ENCODE measurements at regions of chr7 and their contacts with region 1.

Region 1: GRCh38 chr7:7681179-7681935 is 37.0 kb downstream of the RPA3 start:
- DNase-seq: peak; percentile 80
- ATAC-seq: peak; percentile 93
- H3K4me3 ChIP-seq: peak overlapping the region; percentile 16; the same call in 1 of the 2 replicates
- H3K27ac ChIP-seq: no peak overlapping the region
- H3K4me1 ChIP-seq: peaks cover 11% of the 10 kb centered on the region
- H3K27me3 ChIP-seq: no peaks in the 10 kb centered on the region
- CTCF ChIP-seq: peak; percentile 81

Region 2: GRCh38 chr7:7354659-7355058 is 326.7 kb before region 1 on chr7:
- CTCF ChIA-PET with region 1: no interaction called
- POLR2A ChIA-PET with region 1: no interaction called
- intact Hi-C with region 1: no loop called
- DNase-seq: peak; percentile 84
- ATAC-seq: peak; percentile 79
- H3K4me3 ChIP-seq: no peak overlapping the region
- H3K27ac ChIP-seq: no peak overlapping the region
- H3K4me1 ChIP-seq: peaks cover 16% of the 10 kb centered on the region; the same call in 1 of the 2 replicates
- H3K27me3 ChIP-seq: no peaks in the 10 kb centered on the region
- CTCF ChIP-seq: no peak

Region 3: GRCh38 chr7:7595451-7595850 is 85.9 kb before region 1 on chr7:
- CTCF ChIA-PET with region 1: no interaction called
- POLR2A ChIA-PET with region 1: no interaction called
- intact Hi-C with region 1: loop called (anchors 2 kb)
- DNase-seq: peak; percentile 62
- ATAC-seq: peak; percentile 61
- H3K4me3 ChIP-seq: no peak overlapping the region
- H3K27ac ChIP-seq: no peak overlapping the region
- H3K4me1 ChIP-seq: no peaks in the 10 kb centered on the region
- H3K27me3 ChIP-seq: no peaks in the 10 kb centered on the region
- CTCF ChIP-seq: peak; percentile 63

Region 4: DNA sequence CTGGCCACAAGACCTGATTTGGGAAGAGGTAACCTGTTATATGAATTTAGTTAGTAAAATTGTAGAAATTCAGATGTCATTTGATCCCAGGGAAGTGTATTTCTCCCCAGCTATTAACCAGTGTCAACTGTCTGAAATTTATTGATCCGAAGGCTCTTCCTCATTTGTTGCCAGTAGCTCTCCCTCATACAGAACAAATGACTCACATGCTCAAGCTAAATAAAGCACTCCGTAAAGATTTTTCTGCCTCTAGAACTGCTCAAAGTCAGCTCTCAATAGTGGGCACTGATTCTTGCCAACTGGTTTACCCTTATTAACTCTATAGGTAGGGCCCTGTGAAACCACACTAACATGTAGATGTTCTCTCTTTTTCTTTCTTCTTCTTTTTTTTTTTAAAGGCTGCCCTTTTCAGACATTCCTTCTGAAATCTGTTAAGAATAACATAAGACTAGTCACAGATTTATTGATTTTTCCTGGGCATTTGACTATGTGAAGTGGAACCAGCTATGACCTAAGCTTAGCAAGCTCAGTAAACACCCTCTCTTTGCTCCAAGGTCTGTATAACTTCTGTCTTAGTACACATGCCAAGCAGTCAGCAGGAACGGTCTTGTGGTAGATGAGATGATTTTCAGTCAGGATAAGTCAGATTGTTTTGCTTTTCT is 15.2 kb after region 1 on chr7:
- CTCF ChIA-PET with region 1: interaction called, 11 read pairs
- POLR2A ChIA-PET with region 1: no interaction called
- intact Hi-C with region 1: no loop called
- DNase-seq: peak; percentile 58
- ATAC-seq: peak; percentile 80
- H3K4me3 ChIP-seq: peak overlapping the region; percentile 30; the same call in 1 of the 2 replicates
- H3K27ac ChIP-seq: peak overlapping the region; percentile 38; the same call in 1 of the 2 replicates
- H3K4me1 ChIP-seq: peaks cover 36% of the 10 kb centered on the region
- H3K27me3 ChIP-seq: no peaks in the 10 kb centered on the region
- CTCF ChIP-seq: no peak

Region 5: DNA sequence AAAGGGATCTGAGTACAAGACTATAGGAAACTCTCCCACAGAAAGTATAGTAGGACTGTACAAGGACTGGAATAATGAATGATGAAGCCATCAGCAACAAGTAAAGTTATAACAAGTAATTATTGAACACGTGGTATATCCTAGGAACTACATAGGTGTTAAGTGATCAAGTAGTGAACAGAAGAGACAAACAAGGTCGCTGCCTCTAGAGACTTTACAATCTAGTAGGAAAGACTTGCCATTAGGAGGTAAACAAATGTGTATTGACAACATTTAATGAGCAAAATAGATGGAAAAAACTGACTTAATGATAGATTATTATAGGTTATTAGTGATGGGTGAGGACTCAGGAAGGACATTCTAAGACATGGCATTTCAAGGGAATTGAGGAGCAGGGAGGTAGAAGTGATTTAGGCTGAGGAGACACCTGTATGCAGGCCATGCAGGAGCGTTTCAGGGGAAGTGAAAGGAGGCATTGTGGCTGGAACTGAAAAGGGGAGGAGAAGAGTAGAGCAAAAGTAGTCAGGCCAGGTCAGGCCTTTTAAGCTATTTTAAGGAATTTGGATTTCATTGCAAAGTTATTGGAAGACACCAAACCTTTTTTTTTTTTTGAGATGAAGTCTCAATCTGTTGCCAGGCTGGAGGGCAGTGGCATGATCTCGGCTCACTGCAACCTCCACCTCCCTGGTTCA is 278.8 kb after region 1 on chr7:
- CTCF ChIA-PET with region 1: no interaction called
- POLR2A ChIA-PET with region 1: no interaction called
- intact Hi-C with region 1: loop called (anchors 5 kb)
- DNase-seq: no peak
- ATAC-seq: no peak
- H3K4me3 ChIP-seq: no peak overlapping the region
- H3K27ac ChIP-seq: no peak overlapping the region
- H3K4me1 ChIP-seq: peaks cover 30% of the 10 kb centered on the region
- H3K27me3 ChIP-seq: no peaks in the 10 kb centered on the region
- CTCF ChIP-seq: no peak

Region 6: GRCh38 chr7:8092140-8092539 is 410.8 kb after region 1 on chr7:
- CTCF ChIA-PET with region 1: no interaction called
- POLR2A ChIA-PET with region 1: no interaction called
- intact Hi-C with region 1: loop called (anchors 1 kb)
- DNase-seq: no peak
- ATAC-seq: no peak
- H3K4me3 ChIP-seq: no peak overlapping the region
- H3K27ac ChIP-seq: no peak overlapping the region
- H3K4me1 ChIP-seq: no peaks in the 10 kb centered on the region
- H3K27me3 ChIP-seq: no peaks in the 10 kb centered on the region
- CTCF ChIP-seq: no peak

Region 7: DNA sequence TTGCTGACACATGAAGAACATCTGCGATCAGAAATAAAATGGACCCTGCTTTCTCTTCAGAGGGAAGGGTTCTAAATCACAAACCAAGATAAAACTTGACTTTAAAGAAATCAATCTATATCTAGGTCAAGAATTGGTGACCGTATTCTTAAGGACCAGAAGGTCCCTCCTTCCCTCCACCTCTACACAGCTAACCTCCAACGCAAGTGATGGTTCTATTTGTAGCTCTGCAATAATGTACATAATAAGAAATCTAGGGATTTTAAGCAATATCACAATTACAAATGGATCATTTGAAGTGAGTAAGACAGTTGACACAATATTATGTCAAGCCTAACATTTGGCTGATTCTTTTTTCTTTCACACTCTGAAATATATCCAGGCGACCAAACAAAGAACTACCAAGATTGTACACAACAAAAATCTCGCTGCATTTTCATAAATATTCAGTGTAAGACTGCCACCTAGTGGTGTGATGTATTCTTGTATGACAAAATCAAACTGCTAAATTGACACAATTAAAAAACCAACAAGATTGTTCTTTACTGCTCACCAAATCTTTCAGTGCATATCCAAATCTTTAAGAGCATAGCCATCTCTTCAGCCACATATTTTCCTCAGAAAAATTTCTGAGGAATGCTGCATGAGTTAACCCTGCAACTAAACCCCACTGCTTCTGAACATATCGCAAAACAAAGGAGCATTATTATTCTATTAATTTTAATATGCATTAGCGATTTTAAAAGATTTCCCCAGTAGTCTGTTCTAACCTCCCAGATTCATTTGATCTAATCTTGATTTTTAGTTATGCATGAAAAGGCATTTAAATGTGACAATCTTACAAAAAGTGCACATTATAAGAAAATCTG is 536.1 kb after region 1 on chr7:
- CTCF ChIA-PET with region 1: no interaction called
- POLR2A ChIA-PET with region 1: no interaction called
- intact Hi-C with region 1: loop called (anchors 1 kb)
- DNase-seq: peak; percentile 80
- ATAC-seq: peak; percentile 46
- H3K4me3 ChIP-seq: no peak overlapping the region
- H3K27ac ChIP-seq: no peak overlapping the region
- H3K4me1 ChIP-seq: no peaks in the 10 kb centered on the region
- H3K27me3 ChIP-seq: no peaks in the 10 kb centered on the region
- CTCF ChIP-seq: peak; percentile 75

Region 8: DNA sequence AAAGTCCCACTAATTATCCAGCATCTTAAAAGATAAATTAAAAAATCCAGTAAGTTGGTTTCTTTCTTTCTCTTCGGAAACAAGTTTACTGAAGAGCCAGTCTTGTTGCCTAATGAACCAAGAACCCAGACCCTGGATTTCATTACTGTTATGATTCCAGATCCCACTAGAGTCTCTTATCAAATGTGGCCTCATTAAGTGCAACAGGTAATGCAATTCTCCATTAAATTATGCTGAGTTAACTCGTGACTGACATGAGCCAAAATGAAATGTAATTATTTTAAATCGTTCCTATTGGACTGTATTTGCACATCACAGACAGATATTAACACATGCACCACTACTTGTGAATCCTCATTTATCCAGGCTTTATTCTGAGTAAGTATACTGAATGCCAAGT is 867.7 kb after region 1 on chr7:
- CTCF ChIA-PET with region 1: no interaction called
- POLR2A ChIA-PET with region 1: no interaction called
- intact Hi-C with region 1: no loop called
- DNase-seq: no peak
- ATAC-seq: no peak
- H3K4me3 ChIP-seq: no peak overlapping the region
- H3K27ac ChIP-seq: no peak overlapping the region
- H3K4me1 ChIP-seq: no peaks in the 10 kb centered on the region
- H3K27me3 ChIP-seq: no peaks in the 10 kb centered on the region
- CTCF ChIP-seq: no peak